ENCODE measurements at regions of chr10 and their contacts with region 1.

Region 1: GRCh38 chr10:77641788-77642397 is 4.3 kb upstream of the KCNMA1 start:
- DNase-seq: peak; percentile 89
- H3K4me3 ChIP-seq: no peak overlapping the region
- H3K27ac ChIP-seq: no peak overlapping the region
- H3K27me3 ChIP-seq: no peaks in the 10 kb centered on the region
- CTCF ChIP-seq: peak; percentile 72

Region 2: DNA sequence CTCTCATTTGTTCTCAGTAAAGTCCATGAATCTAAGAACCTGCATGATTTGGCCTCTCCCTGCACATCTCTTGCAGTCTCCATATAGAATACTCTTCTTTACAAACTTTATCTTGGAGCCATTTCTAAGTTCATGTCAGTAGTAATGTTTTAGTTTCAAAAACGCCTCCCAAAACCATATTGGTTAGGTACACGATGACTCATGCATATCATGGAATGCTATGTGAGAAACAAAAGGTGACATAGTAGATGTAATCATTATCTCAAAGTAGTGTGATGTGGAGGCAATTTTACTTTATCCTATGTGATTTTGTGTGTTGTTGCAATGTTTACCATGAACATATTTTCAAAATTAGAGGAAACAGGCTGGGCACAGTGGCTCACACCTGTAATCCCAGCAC is 525.0 kb before region 1 on chr10:
- in situ Hi-C with region 1: no loop called
- DNase-seq: no peak
- H3K4me3 ChIP-seq: no peak overlapping the region
- H3K27ac ChIP-seq: no peak overlapping the region
- H3K27me3 ChIP-seq: no peaks in the 10 kb centered on the region
- CTCF ChIP-seq: no peak

Region 3: GRCh38 chr10:77173615-77174461 is 468.1 kb before region 1 on chr10:
- in situ Hi-C with region 1: loop called (anchors 10 kb)
- DNase-seq: peak; percentile 82
- H3K4me3 ChIP-seq: no peak overlapping the region
- H3K27ac ChIP-seq: no peak overlapping the region
- H3K27me3 ChIP-seq: no peaks in the 10 kb centered on the region
- CTCF ChIP-seq: peak; percentile 91

Measured in brain microvascular endothelial cell (primary cell).